ENCODE measurements at regions of chr3 and their contacts with region 1.

Region 1: GRCh38 chr3:7285505-7285904 is 424.6 kb downstream of the GRM7 start:
- DNase-seq: no peak
- H3K4me3 ChIP-seq: no peak overlapping the region
- H3K27ac ChIP-seq: no peak overlapping the region
- H3K4me1 ChIP-seq: no peaks in the 10 kb centered on the region
- H3K27me3 ChIP-seq: no peaks in the 10 kb centered on the region
- CTCF ChIP-seq: peak; percentile 27 to 42 (median 29)
- EP300 ChIP-seq: no peak
- POLR2A ChIP-seq: no peak

Region 2: DNA sequence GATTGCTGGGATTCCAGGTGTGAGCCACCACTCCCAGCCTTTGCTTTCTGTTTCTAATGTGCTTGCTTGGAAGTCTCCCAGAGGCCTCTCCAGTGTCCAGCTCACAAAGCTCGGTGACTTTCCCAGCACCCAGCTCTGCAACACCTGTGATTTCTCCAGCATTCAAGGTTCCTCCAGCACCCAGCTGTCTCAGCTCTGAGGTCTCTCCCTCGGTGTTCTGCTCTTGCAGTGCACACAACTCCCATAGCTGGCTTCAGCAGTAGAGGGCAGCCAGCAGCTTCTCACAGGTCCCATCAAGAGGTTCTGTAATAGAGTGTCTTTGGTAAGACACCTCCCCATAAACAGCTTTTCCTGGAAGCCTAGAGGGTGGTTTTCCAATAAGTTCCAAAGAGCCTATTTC is 349.5 kb before region 1 on chr3:
- intact Hi-C with region 1: no loop called
- DNase-seq: no peak
- H3K4me3 ChIP-seq: no peak overlapping the region
- H3K27ac ChIP-seq: no peak overlapping the region
- H3K4me1 ChIP-seq: no peaks in the 10 kb centered on the region
- H3K27me3 ChIP-seq: no peaks in the 10 kb centered on the region
- CTCF ChIP-seq: no peak
- EP300 ChIP-seq: no peak
- POLR2A ChIP-seq: no peak

Region 3: GRCh38 chr3:7518456-7518855 is 233.0 kb after region 1 on chr3:
- intact Hi-C with region 1: no loop called
- DNase-seq: no peak
- H3K4me3 ChIP-seq: no peak overlapping the region
- H3K27ac ChIP-seq: peak overlapping the region in 2 of 4 donors; percentile 9 to 12
- H3K4me1 ChIP-seq: peaks cover 4 to 20% (median 17%) of the 10 kb centered on the region in 4 donors
- H3K27me3 ChIP-seq: no peaks in the 10 kb centered on the region
- CTCF ChIP-seq: no peak
- EP300 ChIP-seq: no peak
- POLR2A ChIP-seq: no peak

Region 4: GRCh38 chr3:7546253-7546652 is 260.7 kb after region 1 on chr3:
- intact Hi-C with region 1: loop called (anchors 5 kb)
- DNase-seq: no peak
- H3K4me3 ChIP-seq: no peak overlapping the region
- H3K27ac ChIP-seq: no peak overlapping the region
- H3K4me1 ChIP-seq: peaks cover 0 to 7% (median 3%) of the 10 kb centered on the region in 4 donors
- H3K27me3 ChIP-seq: no peaks in the 10 kb centered on the region
- CTCF ChIP-seq: peak; percentile 31 to 48 (median 45)
- EP300 ChIP-seq: no peak
- POLR2A ChIP-seq: no peak

Region 5: GRCh38 chr3:7798276-7798675 is 512.8 kb after region 1 on chr3:
- intact Hi-C with region 1: loop called (anchors 10 kb)
- DNase-seq: no peak
- H3K4me3 ChIP-seq: no peak overlapping the region
- H3K27ac ChIP-seq: no peak overlapping the region
- H3K4me1 ChIP-seq: no peaks in the 10 kb centered on the region
- H3K27me3 ChIP-seq: no peaks in the 10 kb centered on the region
- CTCF ChIP-seq: no peak
- EP300 ChIP-seq: no peak
- POLR2A ChIP-seq: no peak

Region 6: GRCh38 chr3:8111069-8111798 is 825.7 kb after region 1 on chr3:
- intact Hi-C with region 1: loop called (anchors 5 kb)
- DNase-seq: no peak
- H3K4me3 ChIP-seq: peak overlapping the region in 3 of 4 donors; percentile 5 to 38 (median 13)
- H3K27ac ChIP-seq: no peak overlapping the region
- H3K4me1 ChIP-seq: peaks cover 0 to 12% (median 9%) of the 10 kb centered on the region in 4 donors
- H3K27me3 ChIP-seq: no peaks in the 10 kb centered on the region
- CTCF ChIP-seq: peak; percentile 72 to 86 (median 77)
- EP300 ChIP-seq: no peak
- POLR2A ChIP-seq: no peak

Measured in esophagus muscularis mucosa (tissue), 4 donors.